ENCODE measurements at regions of chr19 and their contacts with region 1.

Region 1: GRCh38 chr19:37217855-37218591 is at the start of gene ZNF383:
- DNase-seq: peak; percentile 68 to 92 (median 82)
- ATAC-seq: peak; percentile 88
- H3K4me3 ChIP-seq: peak within 1 kb of the TSS; percentile 71 to 92
- H3K4me3 Mint-ChIP-seq: peak within 1 kb of the TSS; percentile 87
- H3K27ac ChIP-seq: peak within 1 kb of the TSS; percentile 69 to 92
- H3K27ac Mint-ChIP-seq: peak within 1 kb of the TSS; percentile 93
- H3K4me1 ChIP-seq: peaks cover 11% of the 10 kb centered on the region
- H3K4me1 Mint-ChIP-seq: peaks cover 31% of the 10 kb centered on the region
- H3K27me3 ChIP-seq: no peaks in the 10 kb centered on the region
- H3K27me3 Mint-ChIP-seq: no peaks in the 10 kb centered on the region
- CTCF ChIP-seq: no peak
- total RNA-seq, gene ZNF383: 17.5 to 18.9 TPM

Region 2: DNA sequence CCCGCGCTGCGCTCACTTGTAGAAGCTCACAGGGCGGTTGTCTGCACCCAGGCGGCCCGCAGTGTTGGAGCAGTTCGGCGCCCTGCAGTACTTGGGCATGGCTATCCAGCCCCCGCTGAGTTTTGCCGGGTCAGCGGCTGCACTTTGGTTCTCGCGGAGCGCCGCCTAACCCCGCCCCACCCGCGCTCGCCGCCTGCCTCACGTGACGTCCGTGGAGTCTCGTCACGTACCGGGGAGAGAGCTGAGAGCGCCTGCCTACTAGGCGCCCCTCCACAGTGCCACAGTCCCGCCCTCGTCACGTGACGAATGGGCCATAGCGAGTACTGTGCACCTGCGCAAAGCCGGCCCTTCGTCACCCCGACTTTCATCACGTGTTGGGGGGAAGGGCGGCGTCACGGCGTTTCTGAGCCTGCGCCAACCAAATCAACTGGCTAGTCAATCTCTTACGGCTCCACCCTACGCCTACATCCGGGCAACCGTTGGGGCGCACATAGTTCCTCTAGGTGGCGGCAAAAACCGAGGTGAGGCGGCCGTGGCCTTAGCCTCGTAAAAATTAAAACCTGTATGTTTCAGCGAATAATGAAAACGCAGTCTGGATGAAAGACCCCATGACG is 1163.8 kb before region 1 on chr19 and contains the start of gene THAP8:
- CTCF ChIA-PET with region 1: no interaction called
- POLR2A ChIA-PET with region 1: no interaction called
- intact Hi-C with region 1: loop called in 1 of 2 experiments (anchors 10 kb)
- DNase-seq: peak; percentile 99 to 100 (median 100)
- ATAC-seq: peak; percentile 86
- H3K4me3 ChIP-seq: peak within 1 kb of the TSS; percentile 74 to 86
- H3K4me3 Mint-ChIP-seq: peak within 1 kb of the TSS; percentile 96
- H3K27ac ChIP-seq: peak within 1 kb of the TSS; percentile 95 to 96
- H3K27ac Mint-ChIP-seq: peak within 1 kb of the TSS; percentile 97
- H3K4me1 ChIP-seq: peaks cover 17% of the 10 kb centered on the region
- H3K4me1 Mint-ChIP-seq: peaks cover 27% of the 10 kb centered on the region
- H3K27me3 ChIP-seq: no peaks in the 10 kb centered on the region
- H3K27me3 Mint-ChIP-seq: no peaks in the 10 kb centered on the region
- CTCF ChIP-seq: peak; percentile 66
- total RNA-seq, gene THAP8: 0.31 to 0.57 TPM

Region 3: DNA sequence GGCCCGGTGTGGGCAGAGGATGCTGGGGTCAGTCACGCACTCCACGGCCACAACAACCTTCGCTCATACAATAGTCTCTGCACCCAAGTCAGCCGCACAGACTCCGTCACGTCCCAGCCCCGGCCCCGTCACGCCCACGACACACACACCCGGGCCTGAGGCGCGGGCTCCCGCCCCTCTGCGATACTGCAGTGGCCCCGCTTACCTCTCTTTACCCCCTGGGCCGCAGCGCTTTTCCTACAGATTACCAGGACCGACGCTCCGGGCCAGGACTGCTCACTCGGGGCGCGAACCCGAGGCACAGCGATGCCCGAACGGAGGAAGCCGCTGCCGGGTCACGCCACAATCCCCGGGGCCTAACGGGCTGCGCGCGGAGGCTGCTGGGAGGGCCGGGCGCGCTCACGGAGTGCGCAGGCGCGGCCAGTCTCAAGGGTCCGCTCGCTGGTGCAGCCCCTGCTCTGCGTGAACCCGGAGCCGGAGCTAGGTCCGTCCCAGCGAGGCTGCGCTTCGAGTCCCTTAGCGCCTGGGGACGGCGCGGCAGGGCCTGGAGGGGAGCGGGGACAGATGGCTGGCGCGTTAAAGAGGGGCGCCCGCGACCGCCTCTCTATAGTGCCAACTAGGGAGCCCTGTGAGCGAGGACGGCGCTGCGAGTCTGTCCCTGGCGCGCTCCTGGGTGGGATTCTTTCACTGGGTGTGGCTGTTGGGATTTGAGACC is 799.6 kb before region 1 on chr19 and contains the start of gene ZFP82:
- CTCF ChIA-PET with region 1: no interaction called
- POLR2A ChIA-PET with region 1: no interaction called
- intact Hi-C with region 1: loop called in 1 of 2 experiments (anchors 1 kb)
- DNase-seq: peak; percentile 56 to 87 (median 75)
- ATAC-seq: peak; percentile 88
- H3K4me3 ChIP-seq: peak within 1 kb of the TSS; percentile 95
- H3K4me3 Mint-ChIP-seq: peak within 1 kb of the TSS; percentile 90
- H3K27ac ChIP-seq: peak within 1 kb of the TSS; percentile 76 to 91
- H3K27ac Mint-ChIP-seq: peak within 1 kb of the TSS; percentile 93
- H3K4me1 ChIP-seq: peaks cover 19% of the 10 kb centered on the region
- H3K4me1 Mint-ChIP-seq: peaks cover 32% of the 10 kb centered on the region
- H3K27me3 ChIP-seq: peaks cover 0 to 10% of the 10 kb centered on the region in 2 experiments
- H3K27me3 Mint-ChIP-seq: peaks cover 14% of the 10 kb centered on the region
- CTCF ChIP-seq: no peak
- total RNA-seq, gene ZFP82: 5.3 to 5.6 TPM

Region 4: DNA sequence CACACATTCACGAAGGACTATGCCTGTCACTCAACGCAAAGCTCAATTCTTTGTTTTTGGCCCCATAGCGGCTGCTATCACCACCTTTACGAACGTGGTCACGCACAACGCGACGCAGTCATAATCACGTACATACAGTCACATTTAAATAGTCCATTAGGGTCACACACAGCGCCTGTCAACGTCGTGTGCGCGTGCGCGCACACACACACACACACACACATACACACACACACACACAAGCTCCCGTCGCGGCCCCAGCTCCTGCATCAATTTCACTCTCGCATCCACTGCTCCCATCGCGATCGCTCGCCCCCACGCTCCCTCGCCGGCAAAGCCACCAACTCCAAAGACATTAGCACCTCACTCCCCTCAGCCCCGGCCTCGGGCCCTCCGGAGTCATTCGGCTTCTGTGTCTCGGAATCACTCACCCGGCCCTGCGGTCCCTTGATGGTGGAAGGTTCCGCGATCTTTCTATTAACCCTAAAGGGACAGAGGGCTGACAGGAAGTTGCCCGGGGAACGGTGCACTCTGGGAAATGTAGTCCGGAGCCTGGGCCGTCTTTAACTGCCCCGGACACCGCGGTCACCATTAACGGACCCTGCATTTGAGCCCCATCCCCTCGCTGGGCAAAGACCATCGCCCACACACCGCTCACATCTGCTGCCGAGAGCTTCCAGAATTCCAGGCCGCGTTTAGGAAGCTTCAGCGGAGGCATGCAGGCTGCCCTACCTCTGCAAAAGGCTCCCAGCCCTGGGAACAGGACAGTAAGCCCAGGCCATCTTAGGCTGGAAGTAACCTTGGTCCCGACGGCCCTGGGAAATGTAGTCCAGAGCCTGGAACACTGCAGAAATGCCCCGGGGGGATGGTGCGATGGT is 379.9 kb before region 1 on chr19 and contains the start of gene ZNF790:
- CTCF ChIA-PET with region 1: no interaction called
- POLR2A ChIA-PET with region 1: no interaction called
- intact Hi-C with region 1: loop called in 1 of 2 experiments (anchors 5 kb)
- DNase-seq: peak; percentile 62 to 92 (median 81)
- ATAC-seq: peak; percentile 87
- H3K4me3 ChIP-seq: peak within 1 kb of the TSS; percentile 86 to 91
- H3K4me3 Mint-ChIP-seq: no peak within 1 kb of the TSS
- H3K27ac ChIP-seq: peak within 1 kb of the TSS; percentile 88 to 97
- H3K27ac Mint-ChIP-seq: no peak within 1 kb of the TSS
- H3K4me1 ChIP-seq: peaks cover 17% of the 10 kb centered on the region
- H3K4me1 Mint-ChIP-seq: peaks cover 21% of the 10 kb centered on the region
- H3K27me3 ChIP-seq: no peaks in the 10 kb centered on the region
- H3K27me3 Mint-ChIP-seq: no peaks in the 10 kb centered on the region
- CTCF ChIP-seq: no peak
- total RNA-seq, gene ZNF790: 2.1 to 3.6 TPM

Region 5: DNA sequence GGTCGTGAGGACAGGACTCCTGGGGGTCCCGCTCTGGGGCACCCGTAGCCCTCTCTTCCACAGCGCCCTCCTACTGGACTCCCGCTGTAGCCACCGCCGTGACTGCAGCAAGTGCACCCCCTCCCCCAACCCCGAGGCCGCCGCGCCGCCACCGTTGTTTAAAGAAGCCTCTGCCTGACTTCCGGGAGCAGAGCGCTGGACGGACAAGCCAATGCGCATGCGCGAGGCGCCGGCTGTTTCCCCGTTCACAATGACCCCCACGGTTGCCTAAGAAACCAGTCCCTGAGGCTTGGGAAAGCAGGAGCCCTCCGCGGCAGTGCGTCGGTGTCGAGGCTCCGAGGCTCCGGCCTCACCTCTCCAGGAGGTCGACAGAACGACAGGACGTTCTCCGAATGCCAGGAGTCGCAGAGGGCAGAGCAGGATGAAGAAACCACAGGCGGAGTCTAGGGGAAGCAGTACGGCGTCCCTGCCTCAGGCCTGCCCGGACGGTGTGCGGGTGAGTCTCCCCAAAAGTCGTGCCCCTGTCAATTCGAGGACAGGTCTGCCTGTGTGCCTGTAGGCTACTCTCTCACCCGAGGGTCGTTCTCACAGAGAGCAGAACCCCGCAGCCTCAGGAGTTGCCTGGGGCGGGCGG is 210.3 kb before region 1 on chr19:
- CTCF ChIA-PET with region 1: no interaction called
- POLR2A ChIA-PET with region 1: no interaction called
- intact Hi-C with region 1: no loop called
- DNase-seq: peak in 7 of 9 experiments; percentile 6 to 53 (median 21)
- ATAC-seq: no peak
- H3K4me3 ChIP-seq: peak overlapping the region in 1 of 2 experiments; percentile 33
- H3K4me3 Mint-ChIP-seq: peak overlapping the region; percentile 75
- H3K27ac ChIP-seq: no peak overlapping the region
- H3K27ac Mint-ChIP-seq: no peak overlapping the region
- H3K4me1 ChIP-seq: no peaks in the 10 kb centered on the region
- H3K4me1 Mint-ChIP-seq: peaks cover 3% of the 10 kb centered on the region
- H3K27me3 ChIP-seq: no peaks in the 10 kb centered on the region
- H3K27me3 Mint-ChIP-seq: peaks cover 2% of the 10 kb centered on the region
- CTCF ChIP-seq: no peak

Region 6: GRCh38 chr19:37309834-37310575 is 92.0 kb after region 1 on chr19:
- CTCF ChIA-PET with region 1: no interaction called
- POLR2A ChIA-PET with region 1: no interaction called
- intact Hi-C with region 1: loop called in 1 of 2 experiments (anchors 10 kb)
- DNase-seq: peak in 4 of 9 experiments; percentile 27 to 64 (median 45)
- ATAC-seq: no peak
- H3K4me3 ChIP-seq: no peak overlapping the region
- H3K4me3 Mint-ChIP-seq: no peak overlapping the region
- H3K27ac ChIP-seq: no peak overlapping the region
- H3K27ac Mint-ChIP-seq: no peak overlapping the region
- H3K4me1 ChIP-seq: no peaks in the 10 kb centered on the region
- H3K4me1 Mint-ChIP-seq: peaks cover 16% of the 10 kb centered on the region
- H3K27me3 ChIP-seq: no peaks in the 10 kb centered on the region
- H3K27me3 Mint-ChIP-seq: peaks cover 4% of the 10 kb centered on the region
- CTCF ChIP-seq: peak; percentile 53

Region 7: DNA sequence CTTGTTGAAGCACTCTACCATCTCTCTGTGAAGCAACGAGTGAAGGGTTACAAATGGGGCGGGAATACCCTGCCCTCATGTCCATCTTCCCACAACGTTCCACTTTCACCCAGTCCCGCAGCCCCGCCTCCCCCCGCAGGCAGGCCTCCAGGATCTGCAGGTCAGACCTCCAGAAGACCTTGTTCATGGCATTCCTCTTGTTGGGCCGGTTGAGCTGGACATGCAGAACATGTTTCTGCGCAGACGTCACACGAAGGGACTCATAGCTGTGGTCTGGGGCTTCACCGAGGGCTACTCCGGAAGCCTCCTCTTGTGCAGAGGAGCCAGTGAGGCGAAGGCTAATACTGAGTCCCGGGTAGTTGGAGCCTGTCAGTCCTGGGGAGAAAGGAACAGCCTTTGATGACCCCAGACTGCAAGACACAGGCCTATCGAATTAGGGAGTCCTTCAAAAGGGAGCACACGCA is 1613.2 kb after region 1 on chr19:
- CTCF ChIA-PET with region 1: no interaction called
- POLR2A ChIA-PET with region 1: no interaction called
- intact Hi-C with region 1: loop called in 1 of 2 experiments (anchors 10 kb)
- DNase-seq: peak in 1 of 9 experiments; percentile 63
- ATAC-seq: no peak
- H3K4me3 ChIP-seq: peak overlapping the region; percentile 74
- H3K4me3 Mint-ChIP-seq: peak overlapping the region; percentile 90
- H3K27ac ChIP-seq: peak overlapping the region; percentile 66 to 85
- H3K27ac Mint-ChIP-seq: peak overlapping the region; percentile 89
- H3K4me1 ChIP-seq: peaks cover 21% of the 10 kb centered on the region
- H3K4me1 Mint-ChIP-seq: peaks cover 37% of the 10 kb centered on the region
- H3K27me3 ChIP-seq: no peaks in the 10 kb centered on the region
- H3K27me3 Mint-ChIP-seq: no peaks in the 10 kb centered on the region
- CTCF ChIP-seq: no peak